ENCODE measurements at regions of chr4 and their contacts with region 1.

Region 1: GRCh38 chr4:83381173-83381572 is 46.5 kb upstream of the HPSE start:
- DNase-seq: no peak
- H3K4me3 ChIP-seq: no peak overlapping the region
- H3K27ac ChIP-seq: no peak overlapping the region
- H3K4me1 ChIP-seq: peaks cover 8% of the 10 kb centered on the region
- H3K27me3 ChIP-seq: no peaks in the 10 kb centered on the region
- CTCF ChIP-seq: no peak

Region 2: GRCh38 chr4:83334425-83335241 is 46.5 kb before region 1 on chr4 and contains the start of gene HPSE:
- CTCF ChIA-PET with region 1: no interaction called
- dilution Hi-C with region 1: no loop called
- in situ Hi-C with region 1: no loop called
- intact Hi-C with region 1: no loop called
- DNase-seq: peak; percentile 87
- H3K4me3 ChIP-seq: peak within 1 kb of the TSS; percentile 51 to 90 (median 70)
- H3K27ac ChIP-seq: peak within 1 kb of the TSS; percentile 23
- H3K4me1 ChIP-seq: peaks cover 13% of the 10 kb centered on the region
- H3K27me3 ChIP-seq: no peaks in the 10 kb centered on the region
- CTCF ChIP-seq: no peak
- total RNA-seq, gene HPSE: 0.17 to 17.4 TPM

Region 3: DNA sequence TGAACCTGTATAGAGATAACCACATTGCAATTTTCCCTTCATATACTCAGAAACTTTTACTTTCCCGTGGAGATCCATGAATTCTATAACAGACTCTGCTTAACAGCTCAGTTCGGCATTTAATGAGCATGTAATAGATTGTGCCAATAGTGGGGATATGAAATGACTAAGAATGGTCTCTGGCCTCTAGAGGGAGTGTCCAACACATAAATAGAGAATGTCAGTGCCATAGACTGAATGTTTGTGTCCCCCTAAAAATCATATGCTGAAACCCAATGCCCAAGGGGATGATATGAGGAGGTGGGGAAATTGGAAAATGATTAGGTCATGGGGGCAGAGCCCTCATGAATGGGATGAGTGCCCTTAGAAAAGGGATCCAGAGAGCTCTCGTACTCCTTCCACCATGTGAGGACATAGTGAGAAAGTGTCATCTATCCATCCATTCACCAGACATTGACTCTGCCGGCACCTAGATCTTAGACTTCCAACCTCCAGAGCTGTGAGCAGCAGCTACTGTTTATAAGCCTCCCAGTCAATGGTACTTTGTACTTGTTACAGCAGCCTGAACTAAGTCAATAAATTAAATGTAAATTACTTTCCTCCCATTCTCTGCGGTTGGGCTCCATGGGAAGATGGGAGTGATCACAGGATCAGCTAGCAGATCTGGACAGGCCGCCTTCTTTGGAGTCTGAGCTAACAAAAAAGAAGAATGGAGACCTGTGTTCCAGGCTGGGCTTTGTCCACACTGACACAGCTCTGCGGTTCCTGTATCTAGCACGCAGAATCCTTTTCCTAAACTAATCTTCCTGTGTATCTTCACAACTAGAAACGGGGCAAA is 18.5 kb before region 1 on chr4:
- CTCF ChIA-PET with region 1: no interaction called
- dilution Hi-C with region 1: no loop called
- in situ Hi-C with region 1: no loop called
- intact Hi-C with region 1: loop called (anchors 2 kb)
- DNase-seq: peak; percentile 32
- H3K4me3 ChIP-seq: no peak overlapping the region
- H3K27ac ChIP-seq: no peak overlapping the region
- H3K4me1 ChIP-seq: peaks cover 19% of the 10 kb centered on the region
- H3K27me3 ChIP-seq: no peaks in the 10 kb centered on the region
- CTCF ChIP-seq: peak; percentile 41 to 42

Measured in mammary epithelial cell (primary cell).